ENCODE measurements at regions of chr2 and their contacts with region 1.

Region 1: DNA sequence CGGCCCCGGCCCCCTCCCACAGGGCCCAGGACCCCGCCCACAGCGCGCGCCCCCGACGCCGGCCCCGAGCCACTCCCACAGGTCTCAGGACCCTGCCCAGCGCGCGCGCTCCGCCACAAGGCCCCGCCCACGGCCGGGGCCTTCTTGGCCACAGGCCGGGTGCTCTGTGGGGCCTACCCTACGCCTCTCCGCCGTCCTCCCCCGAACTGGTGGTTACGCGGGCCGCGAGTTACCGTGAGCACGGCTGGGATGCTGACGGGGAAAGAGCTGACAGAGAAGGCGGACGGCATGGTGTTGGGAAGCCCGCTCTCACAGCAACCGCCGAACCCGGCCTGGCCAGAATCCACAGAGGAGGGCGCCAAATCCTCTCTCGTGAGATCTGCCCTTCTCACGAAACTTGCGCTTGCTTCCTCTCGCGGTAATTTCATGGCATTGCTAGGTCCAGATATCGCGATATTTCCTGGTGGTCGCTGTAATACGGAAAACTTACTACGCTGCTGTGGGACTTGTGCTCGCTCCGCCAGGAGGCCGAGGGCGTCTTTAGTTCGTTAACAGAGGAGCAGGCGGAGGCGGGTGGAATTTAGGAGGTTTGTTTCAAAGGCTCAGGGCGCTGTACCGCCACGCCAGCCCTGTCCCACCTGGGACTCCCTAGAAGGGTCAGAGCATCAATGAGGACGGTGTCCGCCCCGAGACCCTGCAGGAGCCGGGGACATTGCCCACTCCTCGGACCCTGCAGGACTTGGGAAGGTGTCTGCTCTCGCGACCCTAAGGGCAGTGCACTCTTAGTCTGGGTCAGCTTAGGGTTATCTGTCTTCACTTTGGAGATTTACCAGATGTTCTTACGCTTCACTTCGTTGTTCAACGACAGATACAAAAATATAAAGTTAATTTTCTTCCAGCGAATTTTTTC is at the start of gene TMEM18:
- DNase-seq: peak; percentile 100
- ATAC-seq: peak; percentile 73
- H3K4me3 ChIP-seq: peak within 1 kb of the TSS; percentile 91 to 97 (median 95)
- H3K27ac ChIP-seq: peak within 1 kb of the TSS; percentile 100
- H3K4me1 ChIP-seq: peaks cover 25% of the 10 kb centered on the region
- H3K27me3 ChIP-seq: no peaks in the 10 kb centered on the region; a peak in 1 of 5 replicates
- CTCF ChIP-seq: peak; percentile 80
- EP300 ChIP-seq: no peak
- POLR2A ChIP-seq: peak; percentile 92 to 97
- RAD21 ChIP-seq: peak; percentile 57
- total RNA-seq, gene TMEM18: 39.7 and 45.9 TPM in 2 replicates

Region 2: DNA sequence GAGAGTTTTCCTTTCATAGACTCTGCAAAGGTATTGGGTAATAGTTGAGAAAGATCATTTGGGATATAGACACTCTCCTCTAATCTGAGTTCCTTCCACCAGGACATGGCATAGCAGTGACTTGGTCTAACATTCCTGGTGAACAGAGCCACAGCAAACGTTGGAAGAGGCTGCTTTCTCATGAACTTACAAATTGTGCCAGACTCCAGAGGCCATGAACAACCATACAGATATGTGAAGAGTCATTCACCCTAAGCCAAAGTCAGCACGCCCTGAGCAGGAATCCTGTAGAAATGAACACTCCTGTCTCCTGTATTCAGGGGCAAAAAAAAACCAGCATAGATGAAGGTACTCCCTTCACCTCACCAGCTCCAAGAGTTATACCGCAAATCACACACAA is 152.9 kb before region 1 on chr2:
- CTCF ChIA-PET with region 1: no interaction called
- POLR2A ChIA-PET with region 1: no interaction called
- in situ Hi-C with region 1: no loop called
- intact Hi-C with region 1: no loop called
- DNase-seq: no peak
- ATAC-seq: no peak
- H3K4me3 ChIP-seq: no peak overlapping the region
- H3K27ac ChIP-seq: no peak overlapping the region
- H3K4me1 ChIP-seq: no peaks in the 10 kb centered on the region
- H3K27me3 ChIP-seq: peaks cover 0 to 39% of the 10 kb centered on the region in 2 experiments; a peak in 3 of 5 replicates
- CTCF ChIP-seq: no peak
- EP300 ChIP-seq: no peak
- POLR2A ChIP-seq: no peak
- RAD21 ChIP-seq: no peak

Region 3: GRCh38 chr2:735670-736582 is 58.6 kb after region 1 on chr2:
- CTCF ChIA-PET with region 1: no interaction called
- POLR2A ChIA-PET with region 1: interaction called, 4 read pairs
- in situ Hi-C with region 1: no loop called
- intact Hi-C with region 1: loop called (anchors 1 kb)
- DNase-seq: no peak
- ATAC-seq: peak; percentile 35
- H3K4me3 ChIP-seq: no peak overlapping the region
- H3K27ac ChIP-seq: no peak overlapping the region
- H3K4me1 ChIP-seq: peaks cover 3% of the 10 kb centered on the region; the same call in 1 of the 2 replicates
- H3K27me3 ChIP-seq: peaks cover 0 to 3% of the 10 kb centered on the region in 2 experiments; a peak in 1 of 5 replicates
- CTCF ChIP-seq: no peak
- EP300 ChIP-seq: no peak
- POLR2A ChIP-seq: no peak
- RAD21 ChIP-seq: no peak